Activated naive CD4-positive, alpha-beta T cell treated with anti-CD3 and anti-CD28 coated beads for 36 hours (primary cell): ENCODE measurements at regions of chrX and their contacts with region 1.

Region 1: DNA sequence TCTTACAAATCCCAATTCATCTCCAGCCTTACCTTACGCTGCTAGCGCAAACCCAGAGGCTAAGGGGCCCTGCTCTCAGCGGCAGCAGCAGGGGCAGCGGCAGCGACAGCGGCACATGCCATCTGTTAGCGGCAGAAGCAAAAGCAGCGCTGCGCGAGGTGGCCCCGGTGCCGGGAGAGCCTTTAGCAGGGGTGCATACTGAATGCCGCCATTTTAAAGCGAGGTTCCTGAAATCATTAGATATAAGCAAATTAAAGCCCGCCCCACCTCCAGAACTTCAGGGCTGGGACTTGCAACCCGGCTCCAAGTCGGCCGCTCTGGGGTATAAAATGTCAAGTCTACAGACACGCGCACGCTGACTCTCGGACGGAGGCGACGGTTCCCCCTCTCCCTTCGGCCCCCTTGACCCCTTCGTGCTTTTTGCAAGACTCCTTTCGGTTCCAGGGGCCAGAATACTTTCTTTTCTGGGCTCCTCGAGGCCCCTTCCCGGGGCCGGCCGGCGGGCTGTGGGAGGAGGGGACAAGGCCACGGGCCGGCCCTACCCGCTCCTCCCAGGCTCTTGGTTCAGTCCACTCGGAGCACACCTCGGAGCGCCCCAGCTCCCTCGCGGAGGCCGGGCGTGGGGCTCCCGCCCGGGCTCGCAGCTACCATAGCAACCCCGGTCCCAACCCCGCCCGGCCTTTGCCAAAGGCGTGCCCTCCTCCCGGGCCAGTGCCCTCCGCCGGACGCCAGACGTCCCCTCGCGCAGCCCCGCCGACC is at the start of gene MBNL3:
- DNase-seq: peak; percentile 63
- H3K4me3 Mint-ChIP-seq: peak within 1 kb of the TSS; percentile 95
- H3K27ac Mint-ChIP-seq: peak within 1 kb of the TSS; percentile 96
- H3K4me1 Mint-ChIP-seq: peaks cover 33% of the 10 kb centered on the region
- H3K27me3 Mint-ChIP-seq: no peaks in the 10 kb centered on the region
- total RNA-seq, gene MBNL3: 14.2 to 15.8 TPM

Region 2: GRCh38 chrX:131812836-131813825 is 675.9 kb before region 1 on chrX:
- CTCF ChIA-PET with region 1: interaction called, 4 read pairs
- intact Hi-C with region 1: loop called (anchors 2 kb)
- DNase-seq: peak; percentile 79
- H3K4me3 Mint-ChIP-seq: peak overlapping the region; percentile 67
- H3K27ac Mint-ChIP-seq: peak overlapping the region; percentile 89
- H3K4me1 Mint-ChIP-seq: peaks cover 30% of the 10 kb centered on the region
- H3K27me3 Mint-ChIP-seq: no peaks in the 10 kb centered on the region

Region 3: GRCh38 chrX:132022967-132023895 is 465.8 kb before region 1 on chrX and contains the start of gene STK26:
- CTCF ChIA-PET with region 1: no interaction called
- intact Hi-C with region 1: loop called (anchors 2 kb)
- DNase-seq: peak; percentile 80
- H3K4me3 Mint-ChIP-seq: peak within 1 kb of the TSS; percentile 91
- H3K27ac Mint-ChIP-seq: peak within 1 kb of the TSS; percentile 91
- H3K4me1 Mint-ChIP-seq: peaks cover 31% of the 10 kb centered on the region
- H3K27me3 Mint-ChIP-seq: no peaks in the 10 kb centered on the region
- total RNA-seq, gene STK26: 54.0 to 55.6 TPM

Region 4: DNA sequence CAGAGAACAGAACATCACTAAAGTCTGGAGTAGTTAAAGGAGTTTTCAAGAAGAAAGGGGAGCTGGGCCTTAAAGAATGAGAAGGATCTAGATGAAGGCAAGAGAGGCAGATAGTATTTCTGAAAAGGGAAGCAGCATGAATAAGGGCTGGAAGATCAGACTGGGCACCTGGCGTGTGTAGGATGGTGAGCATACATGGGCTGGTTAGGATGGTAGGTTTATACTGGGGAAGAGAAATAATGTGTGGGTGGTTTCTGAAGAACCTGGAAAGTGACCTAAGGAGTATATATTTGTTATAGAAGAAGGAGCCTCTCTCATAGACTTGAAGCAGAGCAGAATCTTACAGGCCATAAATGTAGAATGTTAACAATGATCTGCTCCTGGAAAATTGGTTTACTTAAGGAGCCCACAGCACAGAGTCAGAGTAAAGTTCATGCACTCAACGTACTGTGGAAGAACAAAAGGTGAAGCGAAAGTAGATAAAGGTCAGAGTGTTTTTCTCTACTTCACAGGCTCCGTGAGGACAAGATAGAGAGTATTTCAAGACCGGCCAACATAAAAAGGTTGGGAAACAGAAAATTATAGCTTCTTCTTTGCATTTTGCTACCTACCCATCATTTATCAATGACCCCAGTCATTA is 36.0 kb before region 1 on chrX:
- CTCF ChIA-PET with region 1: no interaction called
- intact Hi-C with region 1: no loop called
- DNase-seq: no peak
- H3K4me3 Mint-ChIP-seq: no peak overlapping the region
- H3K27ac Mint-ChIP-seq: no peak overlapping the region
- H3K4me1 Mint-ChIP-seq: no peaks in the 10 kb centered on the region
- H3K27me3 Mint-ChIP-seq: no peaks in the 10 kb centered on the region

Region 5: DNA sequence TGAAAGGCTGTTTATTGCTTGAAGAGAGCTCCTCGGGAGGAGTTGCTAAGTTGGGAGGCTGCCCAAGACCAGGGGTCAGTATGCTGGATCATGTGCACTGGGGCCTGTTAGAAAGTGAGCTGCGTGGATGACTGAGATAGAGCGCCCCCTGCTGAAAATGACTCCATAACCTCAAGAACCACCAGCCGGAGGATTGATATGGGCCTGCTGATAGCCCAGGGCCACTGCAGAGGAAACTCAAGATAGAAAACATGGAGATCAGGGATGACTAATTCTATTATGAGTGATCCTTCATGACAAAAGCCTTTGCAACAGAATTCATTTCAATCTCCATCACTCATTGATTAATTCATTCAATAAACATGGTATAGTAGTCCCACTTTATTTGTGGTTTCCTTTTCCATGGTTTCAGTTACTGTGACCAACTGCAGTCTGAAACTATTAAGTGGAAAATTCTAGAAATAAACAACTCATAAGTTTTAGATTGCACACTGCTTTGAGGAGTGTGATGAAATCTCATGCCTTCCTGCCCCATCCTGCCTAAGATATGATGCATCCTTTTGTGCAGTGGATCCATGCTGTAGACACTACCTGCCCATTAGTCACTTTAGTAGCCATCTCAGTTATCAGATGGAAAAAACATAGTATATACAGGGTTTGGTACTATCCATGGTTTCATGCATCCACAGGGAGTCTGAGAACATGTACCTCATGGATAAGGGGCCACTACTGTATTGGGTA is 126.6 kb after region 1 on chrX:
- CTCF ChIA-PET with region 1: interaction called, 3 read pairs
- intact Hi-C with region 1: loop called (anchors 5 kb)
- DNase-seq: peak; percentile 60
- H3K4me3 Mint-ChIP-seq: no peak overlapping the region
- H3K27ac Mint-ChIP-seq: no peak overlapping the region
- H3K4me1 Mint-ChIP-seq: no peaks in the 10 kb centered on the region
- H3K27me3 Mint-ChIP-seq: no peaks in the 10 kb centered on the region

Region 6: DNA sequence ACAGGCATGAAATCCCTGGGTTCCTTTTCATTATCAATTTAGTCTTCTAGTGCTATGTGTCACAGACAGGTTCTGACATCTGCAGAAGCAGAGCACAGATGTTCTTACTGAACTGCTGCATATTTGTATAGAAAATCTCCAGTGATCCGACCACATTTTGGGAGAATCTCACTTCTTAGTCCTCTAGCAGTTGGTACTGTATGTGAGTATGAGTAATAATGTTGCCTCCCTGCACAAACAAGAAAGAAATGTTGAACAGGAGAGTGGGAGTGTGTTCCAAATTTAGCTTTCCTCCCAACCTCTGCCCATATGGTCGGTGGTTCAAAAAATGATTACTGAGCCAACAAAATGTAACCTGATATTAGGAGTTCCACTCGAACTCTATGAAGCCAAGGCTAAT is 1091.6 kb after region 1 on chrX:
- CTCF ChIA-PET with region 1: no interaction called
- intact Hi-C with region 1: no loop called
- DNase-seq: no peak
- H3K4me3 Mint-ChIP-seq: no peak overlapping the region
- H3K27ac Mint-ChIP-seq: no peak overlapping the region
- H3K4me1 Mint-ChIP-seq: no peaks in the 10 kb centered on the region
- H3K27me3 Mint-ChIP-seq: no peaks in the 10 kb centered on the region

Region 7: DNA sequence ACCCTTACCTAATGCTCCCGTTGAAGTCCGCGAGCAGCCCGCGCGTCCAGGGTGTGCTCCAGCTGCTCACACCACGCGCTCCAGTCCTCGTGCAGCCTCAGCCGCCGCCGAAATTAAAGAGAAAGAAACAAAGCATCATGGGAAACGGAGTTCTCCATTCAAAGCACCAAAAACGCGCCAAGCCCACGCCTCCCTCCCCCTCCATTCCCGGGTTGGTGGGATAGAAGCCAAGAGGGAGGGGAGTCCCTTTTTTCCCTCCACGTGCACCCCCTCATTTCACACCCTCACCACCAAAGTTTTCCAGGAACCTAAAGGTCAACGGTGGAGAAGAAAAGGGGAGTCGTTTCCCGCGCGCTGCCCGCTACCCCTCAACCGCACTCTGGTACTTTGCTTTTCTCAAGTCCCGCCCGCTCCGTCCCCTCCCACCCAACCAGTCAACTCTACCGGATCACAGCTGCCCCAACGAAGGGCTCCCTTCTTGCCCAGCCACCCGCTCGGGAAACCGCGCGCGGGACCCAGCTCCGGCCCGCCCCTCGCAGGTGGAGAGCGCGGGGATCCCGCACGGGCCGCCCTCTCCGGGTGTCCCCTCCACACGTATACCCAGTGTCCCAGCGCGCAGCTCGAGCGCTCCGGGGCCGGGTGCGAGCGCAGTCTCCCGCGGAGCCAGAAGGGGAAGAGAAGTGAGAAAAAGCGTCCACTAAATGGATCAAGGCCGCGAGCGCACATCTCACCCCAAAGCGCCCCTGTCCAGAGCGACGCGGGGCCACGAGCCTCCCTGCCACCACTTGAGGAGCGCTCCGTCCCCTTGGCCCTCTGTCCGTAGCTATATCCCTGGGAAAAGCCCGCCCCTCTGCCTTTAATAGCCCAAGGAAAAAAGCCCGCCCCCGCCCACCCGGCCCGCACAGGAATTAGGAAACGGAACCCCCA is 1682.9 kb after region 1 on chrX:
- CTCF ChIA-PET with region 1: no interaction called
- intact Hi-C with region 1: loop called (anchors 10 kb)
- DNase-seq: peak; percentile 53
- H3K4me3 Mint-ChIP-seq: peak overlapping the region; percentile 77
- H3K27ac Mint-ChIP-seq: peak overlapping the region; percentile 87
- H3K4me1 Mint-ChIP-seq: peaks cover 19% of the 10 kb centered on the region
- H3K27me3 Mint-ChIP-seq: peaks cover 3% of the 10 kb centered on the region